Activated CD4-positive, alpha-beta T cell treated with anti-CD3 and anti-CD28 coated beads, Interleukin-2, amount 10 ng/mL, durations not matched to agents 24 days and 14 days (primary cell): ENCODE measurements at regions of chr3 and their contacts with region 1.

Region 1: DNA sequence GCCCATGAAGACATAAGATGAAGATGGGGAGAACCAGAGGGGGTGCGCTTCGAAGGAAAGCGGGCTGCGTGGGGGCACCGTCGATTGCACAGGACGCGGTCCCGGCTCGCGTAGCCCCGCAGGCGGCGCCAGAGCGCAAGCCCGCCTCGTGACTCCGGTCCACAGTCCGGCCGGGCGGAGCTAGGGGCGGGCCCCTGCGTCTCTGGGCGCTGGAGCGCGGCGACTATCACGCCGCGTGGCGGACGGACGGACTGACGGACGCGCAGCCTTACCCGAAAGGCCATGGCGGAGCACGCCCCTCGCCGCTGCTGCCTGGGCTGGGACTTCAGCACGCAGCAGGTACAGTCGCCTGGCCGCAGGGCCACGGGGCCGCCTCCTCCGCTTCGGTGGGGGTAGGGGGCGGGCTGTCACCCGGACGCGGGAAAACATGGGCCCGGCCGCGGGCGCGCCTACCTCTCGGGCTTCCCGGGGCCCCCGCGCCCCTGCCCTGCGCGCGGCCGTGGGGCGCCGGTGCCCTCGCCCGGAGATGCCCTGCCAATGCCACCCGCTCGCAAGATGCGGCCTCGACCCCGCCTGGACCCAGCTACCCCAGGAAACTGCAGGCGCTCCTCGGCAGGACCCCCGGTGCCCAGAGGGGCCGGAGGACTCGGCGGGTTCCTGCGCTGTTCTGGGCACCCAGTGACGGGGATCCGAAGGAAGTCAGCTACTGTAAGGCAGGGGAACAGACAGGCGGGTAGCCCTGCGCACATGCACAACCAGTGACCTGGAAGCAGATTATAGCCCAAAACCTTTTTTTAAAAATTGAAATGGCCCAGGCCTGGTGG is at the start of gene XYLB:
- DNase-seq: peak; percentile 96
- H3K4me3 Mint-ChIP-seq: peak within 1 kb of the TSS; percentile 80
- H3K27ac Mint-ChIP-seq: no peak within 1 kb of the TSS
- H3K4me1 Mint-ChIP-seq: peaks cover 7% of the 10 kb centered on the region
- H3K27me3 Mint-ChIP-seq: peaks cover 8% of the 10 kb centered on the region
- total RNA-seq, gene XYLB: 11.1 and 11.6 TPM in 2 replicates

Region 2: DNA sequence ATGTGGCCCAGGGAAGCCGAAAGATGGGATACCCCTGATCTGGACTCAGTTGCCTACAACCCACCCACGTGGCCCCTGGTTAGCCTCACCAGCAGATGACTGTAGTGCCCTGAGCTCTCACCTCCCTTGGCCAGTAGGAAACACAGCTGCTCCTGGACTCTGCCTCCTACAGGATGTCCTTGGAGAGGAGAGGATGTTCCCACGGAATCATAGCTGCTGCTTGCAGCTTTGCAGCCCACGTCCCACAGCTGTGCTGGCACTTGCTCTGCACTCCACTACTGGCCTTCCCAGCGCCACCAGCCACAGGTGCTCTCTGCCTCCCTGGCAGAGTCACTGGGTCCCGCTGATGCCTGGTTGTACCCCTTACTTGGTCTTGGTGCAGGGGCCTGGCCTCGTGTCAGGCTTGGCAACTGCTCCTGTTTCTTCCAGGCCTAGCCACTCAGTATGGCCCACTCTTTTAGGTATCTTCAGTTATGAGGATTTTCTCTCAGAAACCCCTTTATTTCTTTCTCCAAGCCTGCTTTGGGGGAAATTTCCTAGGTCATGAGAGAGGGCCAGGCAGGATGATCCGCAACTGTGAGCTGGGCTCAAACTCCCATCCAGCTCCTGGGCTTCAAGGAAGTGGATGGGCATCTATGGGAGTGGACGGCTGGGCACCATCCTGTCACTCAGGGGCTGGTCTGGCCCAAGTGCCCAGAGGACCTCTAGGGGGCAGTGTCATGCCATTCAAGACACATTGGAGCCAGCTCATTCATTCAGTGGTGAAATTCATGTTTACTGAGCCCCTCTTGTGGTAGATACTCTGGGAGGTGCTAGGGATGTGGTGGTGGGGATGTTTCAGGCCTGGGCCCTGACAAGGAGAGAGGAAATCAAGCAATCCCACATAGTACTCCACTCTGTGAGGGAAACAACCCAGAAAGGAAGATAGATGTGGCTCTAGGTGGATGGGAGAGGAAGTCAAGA is 372.4 kb before region 1 on chr3:
- intact Hi-C with region 1: loop called (anchors 5 kb)
- DNase-seq: peak; percentile 91
- H3K4me3 Mint-ChIP-seq: no peak overlapping the region
- H3K27ac Mint-ChIP-seq: no peak overlapping the region
- H3K4me1 Mint-ChIP-seq: peaks cover 4% of the 10 kb centered on the region
- H3K27me3 Mint-ChIP-seq: no peaks in the 10 kb centered on the region

Region 3: GRCh38 chr3:38101811-38102443 is 244.9 kb before region 1 on chr3:
- intact Hi-C with region 1: no loop called
- DNase-seq: no peak
- H3K4me3 Mint-ChIP-seq: no peak overlapping the region
- H3K27ac Mint-ChIP-seq: no peak overlapping the region
- H3K4me1 Mint-ChIP-seq: no peaks in the 10 kb centered on the region
- H3K27me3 Mint-ChIP-seq: peaks cover 19% of the 10 kb centered on the region

Region 4: DNA sequence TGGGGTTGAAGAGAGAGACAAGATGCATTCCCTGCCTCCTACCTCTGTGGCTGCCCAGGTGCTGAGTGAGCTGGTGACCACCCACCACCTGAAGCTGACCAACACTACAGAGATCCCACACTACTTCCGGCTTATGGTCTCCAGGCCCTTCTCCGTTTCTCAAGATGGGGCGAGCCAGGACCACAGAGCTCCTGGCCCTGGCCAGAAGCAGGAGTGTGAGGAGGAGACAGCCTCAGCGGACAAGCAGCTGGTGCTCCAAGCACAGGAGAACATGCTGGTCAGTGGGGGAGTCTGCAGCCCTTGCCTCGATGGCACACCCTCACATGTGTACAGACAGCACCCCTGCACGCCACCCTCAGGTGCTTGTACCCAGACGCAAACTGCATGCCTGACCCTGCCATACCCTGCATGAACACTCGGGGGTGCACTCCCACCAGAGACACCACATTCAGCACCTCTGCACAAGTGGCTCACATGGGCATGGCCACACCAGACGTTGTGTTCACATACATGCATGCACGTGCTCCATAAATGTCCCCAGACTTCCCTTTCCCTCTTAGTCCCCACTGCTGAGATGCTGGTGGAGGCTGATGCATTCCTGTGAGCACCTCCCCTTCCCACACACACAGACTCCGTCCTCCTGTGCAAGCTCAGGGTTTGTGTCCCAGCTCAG is 228.9 kb before region 1 on chr3:
- intact Hi-C with region 1: loop called (anchors 1 kb)
- DNase-seq: peak; percentile 92
- H3K4me3 Mint-ChIP-seq: no peak overlapping the region
- H3K27ac Mint-ChIP-seq: no peak overlapping the region
- H3K4me1 Mint-ChIP-seq: peaks cover 9% of the 10 kb centered on the region
- H3K27me3 Mint-ChIP-seq: no peaks in the 10 kb centered on the region

Region 5: GRCh38 chr3:38411591-38411990 is 64.8 kb after region 1 on chr3:
- intact Hi-C with region 1: no loop called
- DNase-seq: peak; percentile 10
- H3K4me3 Mint-ChIP-seq: no peak overlapping the region
- H3K27ac Mint-ChIP-seq: no peak overlapping the region
- H3K4me1 Mint-ChIP-seq: no peaks in the 10 kb centered on the region
- H3K27me3 Mint-ChIP-seq: no peaks in the 10 kb centered on the region

Region 6: GRCh38 chr3:38453075-38453912 is 106.5 kb after region 1 on chr3 and contains the start of gene ACVR2B:
- intact Hi-C with region 1: loop called (anchors 1 kb)
- DNase-seq: peak; percentile 93
- H3K4me3 Mint-ChIP-seq: peak within 1 kb of the TSS; percentile 99
- H3K27ac Mint-ChIP-seq: peak within 1 kb of the TSS; percentile 92
- H3K4me1 Mint-ChIP-seq: peaks cover 19% of the 10 kb centered on the region
- H3K27me3 Mint-ChIP-seq: peaks cover 24% of the 10 kb centered on the region
- total RNA-seq, gene ACVR2B: 12.2 and 12.6 TPM in 2 replicates

Region 7: GRCh38 chr3:38479431-38480092 is 132.8 kb after region 1 on chr3:
- intact Hi-C with region 1: loop called (anchors 1 kb)
- DNase-seq: peak; percentile 85
- H3K4me3 Mint-ChIP-seq: no peak overlapping the region
- H3K27ac Mint-ChIP-seq: no peak overlapping the region
- H3K4me1 Mint-ChIP-seq: no peaks in the 10 kb centered on the region
- H3K27me3 Mint-ChIP-seq: no peaks in the 10 kb centered on the region

Region 8: DNA sequence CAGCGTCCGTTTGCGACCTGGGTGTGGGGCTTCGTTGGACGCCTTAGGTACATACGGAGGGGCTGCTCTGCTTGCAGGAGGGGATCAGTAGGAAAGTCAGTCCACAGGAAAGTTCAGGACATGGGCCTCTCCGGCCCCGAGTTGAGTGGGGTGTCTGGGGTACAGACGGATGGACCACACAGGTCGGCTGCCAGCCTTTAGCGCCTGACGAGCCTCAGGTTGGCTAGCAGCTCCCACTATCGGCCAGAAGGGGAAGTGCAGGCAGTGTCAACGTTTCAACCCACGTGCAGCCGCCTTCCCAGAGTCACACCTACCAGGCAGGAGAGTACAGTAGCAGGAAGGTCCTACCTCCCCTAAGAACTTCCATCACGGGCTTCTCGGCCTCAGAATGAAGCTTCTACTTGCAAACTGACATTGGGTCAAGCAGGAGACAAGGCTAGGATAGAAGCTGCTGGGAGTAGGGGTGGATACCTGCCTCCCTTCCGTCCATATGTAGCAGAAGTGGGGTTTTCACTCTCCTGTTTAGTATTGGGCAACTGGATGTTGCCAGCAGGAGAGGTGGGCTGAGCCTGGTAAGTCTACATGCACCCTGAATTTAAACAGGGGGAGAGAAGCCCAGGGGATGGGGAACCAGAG is 304.5 kb after region 1 on chr3:
- intact Hi-C with region 1: loop called (anchors 5 kb)
- DNase-seq: peak; percentile 92
- H3K4me3 Mint-ChIP-seq: no peak overlapping the region
- H3K27ac Mint-ChIP-seq: no peak overlapping the region
- H3K4me1 Mint-ChIP-seq: peaks cover 5% of the 10 kb centered on the region
- H3K27me3 Mint-ChIP-seq: peaks cover 17% of the 10 kb centered on the region